WTC11 (cell line): ENCODE measurements at regions of chr6 and their contacts with region 1.

Region 1: DNA sequence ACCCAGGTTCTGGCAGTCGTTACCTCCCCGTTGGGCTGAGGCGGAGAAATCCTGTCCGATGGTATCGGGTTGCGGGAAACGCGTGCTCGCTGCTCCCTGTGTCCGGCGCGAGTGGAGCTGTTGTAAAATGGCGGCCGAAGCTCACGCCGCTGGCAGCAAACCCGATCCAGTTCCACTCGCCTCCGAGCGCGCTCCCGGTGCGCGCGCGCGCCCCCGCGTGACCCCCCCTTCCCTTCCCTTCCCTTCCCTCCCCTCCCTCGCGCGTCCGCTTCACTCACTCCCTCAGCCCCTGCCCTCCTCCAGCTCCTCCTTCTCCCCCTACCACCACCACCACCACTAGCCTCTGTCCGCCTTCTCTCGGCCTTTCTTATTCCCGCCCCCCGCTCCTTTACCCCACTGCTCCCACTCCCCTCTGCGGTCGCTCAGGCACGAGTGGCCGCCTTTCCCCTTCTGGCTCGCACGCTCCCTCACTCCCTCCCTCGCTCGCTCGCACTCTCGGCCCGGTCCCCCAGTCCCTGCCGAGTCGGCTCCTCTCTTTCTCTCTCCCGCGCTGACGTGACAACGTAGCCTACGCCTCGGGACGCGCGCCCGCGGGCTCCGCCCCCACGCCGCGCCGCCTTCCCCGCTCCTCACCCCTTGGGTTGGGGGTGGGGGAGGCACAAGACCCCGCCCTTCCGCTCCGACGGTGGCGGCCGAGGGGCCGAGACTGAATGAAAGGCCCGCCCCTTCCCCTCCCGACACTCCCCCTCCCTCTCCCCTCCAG is at the start of gene SYNCRIP:
- DNase-seq: peak; percentile 98
- ATAC-seq: peak; percentile 85
- H3K4me3 Mint-ChIP-seq: peak within 1 kb of the TSS; percentile 94
- H3K27ac Mint-ChIP-seq: peak within 1 kb of the TSS; percentile 98
- H3K4me1 Mint-ChIP-seq: peaks cover 47% of the 10 kb centered on the region
- H3K27me3 Mint-ChIP-seq: no peaks in the 10 kb centered on the region
- CTCF ChIP-seq: no peak
- total RNA-seq, gene SYNCRIP: 139 to 150 TPM (median 144 TPM) in 3 replicates

Region 2: DNA sequence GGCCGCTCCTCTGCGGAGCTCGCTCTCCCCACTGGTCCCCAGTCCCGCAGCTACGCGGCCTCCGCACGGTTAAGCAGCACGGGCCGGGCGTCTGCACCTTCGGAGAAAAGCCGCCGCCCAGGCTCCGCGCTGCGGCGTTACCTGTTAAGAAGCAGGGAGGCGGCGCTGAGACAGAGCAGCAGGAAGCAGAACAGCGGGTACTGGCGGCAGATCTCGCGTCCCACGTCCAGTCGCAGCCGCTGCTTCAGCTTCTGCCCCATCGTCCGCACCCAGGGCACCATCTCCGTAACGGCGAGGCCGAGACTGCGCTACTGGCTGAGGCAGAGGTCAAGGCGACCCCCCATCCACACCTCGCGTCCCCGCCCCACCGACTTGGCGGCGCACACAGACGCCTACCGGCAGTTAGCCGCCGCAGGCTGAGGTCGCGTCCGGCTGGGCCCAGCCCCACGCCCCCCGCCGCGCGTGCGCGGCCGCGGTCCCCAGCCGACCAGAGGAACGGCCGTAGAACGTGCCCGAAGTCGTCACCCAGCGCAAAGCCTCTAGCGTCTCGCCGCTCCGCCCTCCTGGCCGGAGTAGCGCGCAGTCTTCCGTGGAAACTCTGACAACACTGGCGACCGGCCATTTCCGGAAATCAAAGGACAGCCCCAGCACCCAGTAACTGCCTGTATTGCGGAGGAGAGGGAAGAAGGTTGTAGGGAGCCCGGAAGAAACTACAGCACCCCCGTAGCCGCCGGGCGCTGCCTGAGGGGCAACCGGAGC is 49.3 kb before region 1 on chr6 and contains the start of gene SNX14:
- CTCF ChIA-PET with region 1: no interaction called
- POLR2A ChIA-PET with region 1: interaction called, 19 read pairs
- DNase-seq: peak; percentile 75
- ATAC-seq: peak; percentile 79
- H3K4me3 Mint-ChIP-seq: peak within 1 kb of the TSS; percentile 96
- H3K27ac Mint-ChIP-seq: peak within 1 kb of the TSS; percentile 97
- H3K4me1 Mint-ChIP-seq: peaks cover 16% of the 10 kb centered on the region
- H3K27me3 Mint-ChIP-seq: peaks cover 18% of the 10 kb centered on the region
- CTCF ChIP-seq: no peak
- total RNA-seq, gene SNX14: 34.3 to 42.6 TPM (median 36.4 TPM) in 3 replicates

Region 3: GRCh38 chr6:85669735-85670194 is 26.8 kb after region 1 on chr6:
- CTCF ChIA-PET with region 1: no interaction called
- POLR2A ChIA-PET with region 1: interaction called, 76 read pairs
- DNase-seq: no peak
- ATAC-seq: peak; percentile 49
- H3K4me3 Mint-ChIP-seq: peak overlapping the region; percentile 50
- H3K27ac Mint-ChIP-seq: peak overlapping the region; percentile 85
- H3K4me1 Mint-ChIP-seq: peaks cover 53% of the 10 kb centered on the region
- H3K27me3 Mint-ChIP-seq: no peaks in the 10 kb centered on the region
- CTCF ChIP-seq: no peak